ENCODE measurements at regions of chr1 and their contacts with region 1.

Region 1: DNA sequence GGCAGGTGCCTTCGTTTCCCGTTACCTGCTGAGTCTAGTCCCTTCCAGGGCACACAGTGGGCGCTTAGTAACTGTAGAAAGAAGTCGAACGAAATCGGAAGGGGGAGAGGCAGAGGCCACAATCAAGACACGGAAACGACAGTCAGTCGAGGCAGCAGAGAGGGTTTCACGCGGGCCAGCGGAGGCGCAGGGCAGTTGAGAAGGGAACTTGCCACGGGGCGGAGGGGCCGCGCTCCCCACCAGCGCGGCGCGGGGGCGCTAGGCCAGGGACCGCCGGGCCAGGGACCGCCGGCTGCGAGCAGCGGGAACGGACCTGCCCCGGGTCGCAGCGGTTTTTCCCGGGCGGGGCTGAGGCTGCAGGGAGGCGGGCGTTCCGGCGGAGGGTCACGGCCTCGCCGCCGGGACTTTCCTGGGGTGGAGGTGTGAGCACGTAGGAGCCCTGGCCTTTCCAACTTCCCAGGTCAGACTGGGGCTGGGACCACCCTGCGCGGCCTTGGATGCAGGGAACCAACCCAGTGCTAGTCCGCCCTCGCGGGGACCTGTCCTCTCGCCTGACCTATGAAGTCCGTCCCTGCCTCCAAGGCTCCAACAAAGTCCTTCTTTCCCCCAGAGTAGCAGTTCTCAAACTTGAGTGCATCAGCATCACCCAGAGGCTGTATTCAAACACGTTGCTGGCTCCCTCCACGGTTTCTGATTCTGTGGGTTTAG is 150.1 kb upstream of the FGGY start:
- DNase-seq: peak; percentile 63
- ATAC-seq: peak; percentile 64
- H3K4me3 Mint-ChIP-seq: peak overlapping the region; percentile 84
- H3K27ac Mint-ChIP-seq: peak overlapping the region; percentile 85
- H3K4me1 Mint-ChIP-seq: peaks cover 34% of the 10 kb centered on the region
- H3K27me3 Mint-ChIP-seq: no peaks in the 10 kb centered on the region
- CTCF ChIP-seq: no peak

Region 2: GRCh38 chr1:58982259-58982998 is 164.4 kb before region 1 on chr1:
- CTCF ChIA-PET with region 1: no interaction called
- POLR2A ChIA-PET with region 1: no interaction called
- intact Hi-C with region 1: no loop called
- DNase-seq: no peak
- ATAC-seq: no peak
- H3K4me3 Mint-ChIP-seq: no peak overlapping the region
- H3K27ac Mint-ChIP-seq: no peak overlapping the region
- H3K4me1 Mint-ChIP-seq: peaks cover 25% of the 10 kb centered on the region
- H3K27me3 Mint-ChIP-seq: no peaks in the 10 kb centered on the region
- CTCF ChIP-seq: no peak

Region 3: GRCh38 chr1:59076612-59077011 is 70.2 kb before region 1 on chr1:
- CTCF ChIA-PET with region 1: no interaction called
- POLR2A ChIA-PET with region 1: no interaction called
- intact Hi-C with region 1: no loop called
- DNase-seq: no peak
- ATAC-seq: no peak
- H3K4me3 Mint-ChIP-seq: no peak overlapping the region
- H3K27ac Mint-ChIP-seq: no peak overlapping the region
- H3K4me1 Mint-ChIP-seq: peaks cover 27% of the 10 kb centered on the region
- H3K27me3 Mint-ChIP-seq: no peaks in the 10 kb centered on the region
- CTCF ChIP-seq: no peak

Region 4: GRCh38 chr1:59124166-59124565 is 22.6 kb before region 1 on chr1:
- CTCF ChIA-PET with region 1: no interaction called
- POLR2A ChIA-PET with region 1: no interaction called
- intact Hi-C with region 1: no loop called
- DNase-seq: no peak
- ATAC-seq: no peak
- H3K4me3 Mint-ChIP-seq: no peak overlapping the region
- H3K27ac Mint-ChIP-seq: no peak overlapping the region
- H3K4me1 Mint-ChIP-seq: peaks cover 24% of the 10 kb centered on the region
- H3K27me3 Mint-ChIP-seq: peaks cover 9% of the 10 kb centered on the region
- CTCF ChIP-seq: no peak

Region 5: GRCh38 chr1:59285691-59286090 is 138.9 kb after region 1 on chr1:
- CTCF ChIA-PET with region 1: no interaction called
- POLR2A ChIA-PET with region 1: no interaction called
- intact Hi-C with region 1: loop called (anchors 5 kb)
- DNase-seq: no peak
- ATAC-seq: no peak
- H3K4me3 Mint-ChIP-seq: no peak overlapping the region
- H3K27ac Mint-ChIP-seq: no peak overlapping the region
- H3K4me1 Mint-ChIP-seq: no peaks in the 10 kb centered on the region
- H3K27me3 Mint-ChIP-seq: peaks cover 2% of the 10 kb centered on the region
- CTCF ChIP-seq: no peak